ENCODE measurements at regions of chr2 and their contacts with region 1.

Region 1: DNA sequence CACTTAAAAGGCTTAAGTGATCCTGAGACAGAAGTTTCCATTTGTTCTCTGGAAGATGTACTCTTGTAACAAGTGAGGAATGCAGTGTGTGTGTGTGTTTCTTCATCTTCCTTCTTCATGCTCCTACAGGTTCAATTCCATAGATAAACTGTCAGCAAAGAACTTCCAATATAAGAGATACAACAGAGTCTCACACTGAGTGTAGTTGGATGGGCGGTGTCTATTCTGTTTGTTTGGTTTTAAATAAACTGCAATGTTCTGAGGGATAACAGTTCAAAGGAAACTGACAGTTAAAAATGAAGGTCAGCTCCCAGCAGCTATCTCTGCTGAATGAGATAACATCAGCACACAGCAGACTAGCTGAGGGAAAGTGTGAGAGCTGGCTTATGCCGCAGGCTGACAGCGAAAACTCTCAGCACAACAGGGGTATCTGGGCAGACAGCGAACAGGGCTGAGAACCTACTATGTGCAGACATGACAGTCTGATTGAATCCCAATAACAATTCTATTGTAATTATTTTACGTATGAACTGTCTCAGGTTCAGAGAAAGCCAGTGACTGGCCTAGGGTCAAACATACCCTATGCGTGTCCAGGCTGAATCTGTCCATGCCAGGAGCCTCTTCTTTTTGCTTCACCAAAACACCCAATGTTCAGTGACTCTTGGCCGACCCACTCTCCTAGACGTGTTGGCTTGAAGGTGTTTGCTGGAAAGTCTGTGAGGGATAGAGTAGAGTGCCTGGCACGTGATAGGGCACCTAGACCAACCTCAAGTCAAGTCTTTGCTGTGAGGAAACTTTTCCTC is 201.9 kb upstream of the TRIB2 start:
- DNase-seq: no peak

Region 2: GRCh38 chr2:12589802-12590320 is 75.0 kb after region 1 on chr2:
- intact Hi-C with region 1: loop called in 1 of 2 experiments (anchors 2 kb)
- DNase-seq: no peak

Measured in posterior vena cava (tissue), 2 donors.